ENCODE measurements at regions of chr2 and their contacts with region 1.

Region 1: DNA sequence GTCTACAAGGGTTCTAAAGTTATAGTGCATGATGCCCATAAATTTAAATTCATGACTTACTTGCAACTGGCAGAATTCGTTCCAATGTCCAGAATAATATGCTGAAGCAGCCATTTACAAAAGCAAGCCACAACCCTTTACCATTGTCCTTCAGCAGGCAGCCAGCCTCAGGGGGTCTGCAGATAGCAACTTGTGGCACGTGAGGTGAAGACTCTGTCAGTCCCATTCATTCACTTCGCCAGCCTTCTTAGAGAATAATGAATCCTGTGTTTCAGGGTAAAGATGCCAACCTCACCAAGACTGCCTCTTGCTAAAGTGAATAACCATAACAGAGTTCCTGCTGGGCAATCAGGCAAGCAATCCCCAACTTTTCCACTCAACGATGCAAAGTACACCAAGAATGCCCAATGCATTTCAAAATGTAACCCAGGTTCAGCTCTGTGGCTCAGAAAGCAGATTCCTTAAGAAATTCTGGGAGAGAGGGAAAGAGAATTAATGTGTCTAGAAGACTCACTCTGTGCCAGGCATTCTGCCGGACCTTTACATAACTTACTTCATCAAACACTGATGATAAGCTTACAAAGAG is 315.4 kb downstream of the NCKAP5 start:
- DNase-seq: no peak

Region 2: DNA sequence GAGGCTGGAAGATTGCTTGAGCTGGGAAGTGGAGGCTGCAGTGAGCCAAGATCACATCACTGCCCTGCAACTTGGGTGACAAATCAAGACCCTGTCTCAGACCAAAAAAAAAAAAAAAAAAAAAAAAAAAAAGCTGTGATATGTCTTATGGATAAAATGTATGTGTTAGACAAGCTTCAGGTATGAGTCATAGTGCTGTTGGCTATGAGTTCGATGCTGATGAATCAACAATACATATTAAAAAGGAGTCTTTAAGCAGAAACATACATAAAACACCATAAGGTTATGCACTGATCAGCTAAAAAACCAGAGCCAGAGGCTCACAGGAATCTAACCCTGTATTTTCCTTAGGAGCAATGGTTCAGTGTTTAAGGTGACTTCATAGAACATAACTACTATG is 16.9 kb before region 1 on chr2:
- intact Hi-C with region 1: loop called in 1 of 2 experiments (anchors 1 kb)
- DNase-seq: no peak

Region 3: GRCh38 chr2:133277796-133278195 is 24.9 kb after region 1 on chr2:
- intact Hi-C with region 1: no loop called
- DNase-seq: no peak

Measured in posterior vena cava (tissue), 2 donors.